CD4-positive, alpha-beta memory T cell (primary cell): ENCODE measurements at regions of chr19 and their contacts with region 1.

Region 1: GRCh38 chr19:42199440-42200115 is 17.9 kb downstream of the DEDD2 start:
- DNase-seq: peak; percentile 53 to 75 (median 65)
- H3K4me3 ChIP-seq: peak overlapping the region; percentile 43 to 49
- H3K4me3 Mint-ChIP-seq: peak overlapping the region; percentile 80 to 93 (median 88)
- H3K27ac ChIP-seq: peak overlapping the region; percentile 86
- H3K27ac Mint-ChIP-seq: peak overlapping the region; percentile 86 to 96 (median 96)
- H3K4me1 ChIP-seq: peaks cover 94% of the 10 kb centered on the region
- H3K4me1 Mint-ChIP-seq: peaks cover 63 to 93% (median 78%) of the 10 kb centered on the region in 4 donors
- H3K27me3 ChIP-seq: no peaks in the 10 kb centered on the region
- H3K27me3 Mint-ChIP-seq: no peaks in the 10 kb centered on the region

Region 2: DNA sequence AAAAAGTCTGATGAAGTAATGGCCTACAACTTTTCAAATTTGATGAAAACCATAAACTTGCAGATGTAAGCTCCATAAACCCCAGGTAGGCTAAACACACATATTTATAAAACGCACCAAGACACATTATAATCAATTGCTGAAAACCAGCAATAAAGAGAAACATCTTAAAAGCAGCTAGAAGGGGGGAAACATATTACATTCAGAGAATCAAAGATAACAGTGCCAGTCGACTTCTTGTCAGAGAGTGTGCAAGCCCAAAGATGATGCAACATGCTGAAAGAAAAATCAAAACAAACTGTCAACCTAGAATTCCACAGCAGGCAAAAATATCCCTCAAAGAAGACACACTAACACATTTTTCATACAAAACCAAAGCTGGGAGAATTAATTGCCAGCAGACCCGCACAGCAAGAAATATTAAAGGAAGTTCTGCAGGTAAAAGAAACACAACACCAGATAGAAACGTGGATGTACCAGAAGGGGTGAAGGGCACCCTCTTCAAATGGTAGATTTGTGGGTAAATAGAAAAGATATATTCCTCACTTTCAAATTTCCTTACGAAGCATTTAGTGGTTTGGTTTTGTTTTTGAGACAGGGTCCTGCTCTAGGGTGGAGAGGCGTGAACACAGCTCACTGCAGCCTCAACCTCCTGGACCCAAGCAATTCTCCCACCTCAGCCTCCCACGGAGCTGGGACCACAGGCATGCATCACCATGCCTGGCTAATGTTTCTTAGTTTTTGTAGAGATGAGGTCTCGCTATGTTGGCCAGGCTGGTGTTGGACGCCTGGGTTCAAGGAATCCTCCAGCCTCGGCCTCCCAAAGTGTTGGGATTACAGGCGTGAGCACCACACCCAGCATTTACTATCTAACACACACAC is 189.1 kb before region 1 on chr19:
- CTCF ChIA-PET with region 1: no interaction called
- POLR2A ChIA-PET with region 1: no interaction called
- intact Hi-C with region 1: no loop called
- DNase-seq: no peak
- H3K4me3 ChIP-seq: no peak overlapping the region
- H3K4me3 Mint-ChIP-seq: no peak overlapping the region
- H3K27ac ChIP-seq: no peak overlapping the region
- H3K27ac Mint-ChIP-seq: no peak overlapping the region
- H3K4me1 ChIP-seq: no peaks in the 10 kb centered on the region
- H3K4me1 Mint-ChIP-seq: no peaks in the 10 kb centered on the region
- H3K27me3 ChIP-seq: no peaks in the 10 kb centered on the region
- H3K27me3 Mint-ChIP-seq: peaks cover 4 to 5% of the 10 kb centered on the region in 2 donors

Region 3: DNA sequence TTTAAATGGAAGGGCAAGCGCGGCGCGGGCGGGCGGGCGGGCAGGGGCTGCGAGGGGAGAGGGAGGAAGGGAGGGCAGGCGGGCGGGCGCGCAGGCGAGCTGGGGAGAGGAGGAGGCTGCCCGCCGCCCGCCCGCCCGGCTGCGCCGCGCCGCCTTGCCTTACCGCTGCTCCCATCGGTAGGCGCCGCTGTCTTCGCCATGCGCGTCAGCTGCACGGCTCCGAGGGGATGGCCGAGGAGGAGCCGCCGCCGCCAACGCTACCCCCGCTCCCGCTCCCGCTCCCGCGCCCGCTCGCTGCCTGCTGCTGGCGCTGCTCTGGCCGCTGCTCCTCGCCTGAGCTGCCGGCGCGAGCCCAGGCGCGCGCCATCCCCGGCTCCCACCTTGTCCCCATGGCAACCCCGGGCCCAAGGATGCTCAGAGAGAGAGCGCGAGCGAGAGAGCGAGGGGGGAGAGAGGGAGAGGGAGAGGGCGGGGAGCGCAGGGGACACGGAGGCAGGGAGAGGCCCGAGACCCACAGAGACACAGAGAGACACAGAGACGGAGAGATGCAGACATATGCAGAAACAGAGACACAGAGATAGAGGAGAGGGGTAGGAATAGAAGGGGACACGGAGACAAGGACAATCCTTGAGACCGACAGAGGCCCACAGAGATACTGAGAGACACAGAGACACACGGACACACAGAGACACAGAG is 22.4 kb before region 1 on chr19:
- CTCF ChIA-PET with region 1: interaction called, 10 read pairs
- POLR2A ChIA-PET with region 1: interaction called, 39 read pairs
- intact Hi-C with region 1: no loop called
- DNase-seq: peak; percentile 75 to 79 (median 78)
- H3K4me3 ChIP-seq: peak overlapping the region in 1 of 2 donors; percentile 59
- H3K4me3 Mint-ChIP-seq: no peak overlapping the region
- H3K27ac ChIP-seq: no peak overlapping the region
- H3K27ac Mint-ChIP-seq: no peak overlapping the region
- H3K4me1 ChIP-seq: peaks cover 29% of the 10 kb centered on the region
- H3K4me1 Mint-ChIP-seq: peaks cover 10 to 29% (median 18%) of the 10 kb centered on the region in 4 donors
- H3K27me3 ChIP-seq: peaks cover 17% of the 10 kb centered on the region
- H3K27me3 Mint-ChIP-seq: peaks cover 4 to 11% of the 10 kb centered on the region in 2 donors

Region 4: DNA sequence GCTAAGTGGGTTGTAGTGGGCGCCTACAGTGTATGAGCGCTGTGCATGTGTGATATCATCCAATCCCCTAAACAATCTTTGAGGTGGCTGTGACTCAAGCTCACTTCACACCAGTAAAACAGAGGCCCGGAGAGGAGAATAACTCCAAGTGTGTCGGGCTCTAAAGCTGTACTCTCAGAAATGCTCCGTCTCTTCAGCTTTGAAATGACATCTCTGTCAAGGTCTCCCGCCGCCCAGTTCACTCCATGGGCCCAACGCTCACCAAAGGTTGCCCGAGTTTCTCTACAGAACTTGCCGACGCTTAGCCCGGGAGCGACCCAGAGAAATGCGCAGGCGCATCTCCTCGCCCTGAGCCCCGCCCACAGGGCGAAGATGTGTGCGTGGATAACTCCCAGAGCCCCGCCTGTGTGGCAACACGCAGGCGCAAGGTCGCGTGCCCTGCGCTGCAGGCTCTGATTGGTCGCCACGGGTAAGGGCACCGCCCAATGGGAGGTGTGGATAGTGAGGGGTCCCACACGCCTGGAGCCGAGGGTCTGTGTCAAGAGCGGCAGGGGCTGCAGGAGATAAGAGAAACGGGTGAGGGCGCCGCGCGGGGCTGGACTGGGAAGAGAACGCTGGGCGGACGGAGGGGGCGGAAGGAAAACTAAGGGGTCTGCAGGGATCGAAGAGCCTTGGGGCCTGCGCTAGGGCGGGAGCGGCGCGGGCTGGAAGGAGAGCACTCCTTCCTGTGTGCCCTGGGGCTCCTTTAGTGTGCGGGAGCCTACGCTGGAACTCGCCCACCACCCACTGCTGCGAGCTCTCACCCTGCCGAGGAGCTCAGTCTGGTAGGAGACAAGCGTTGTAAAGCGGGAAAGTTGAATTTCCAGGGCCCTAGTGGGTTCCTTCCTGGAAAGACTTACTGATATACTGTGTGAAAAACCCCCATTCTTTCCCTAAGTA is 20.5 kb after region 1 on chr19 and contains the start of gene ZNF526:
- CTCF ChIA-PET with region 1: interaction called, 17 read pairs
- POLR2A ChIA-PET with region 1: interaction called, 149 read pairs
- intact Hi-C with region 1: loop called (anchors 1 kb)
- DNase-seq: peak; percentile 95 to 97 (median 97)
- H3K4me3 ChIP-seq: peak within 1 kb of the TSS; percentile 82 to 86
- H3K4me3 Mint-ChIP-seq: peak within 1 kb of the TSS; percentile 96 to 100 (median 98)
- H3K27ac ChIP-seq: peak within 1 kb of the TSS; percentile 77
- H3K27ac Mint-ChIP-seq: peak within 1 kb of the TSS; percentile 94 to 99 (median 98)
- H3K4me1 ChIP-seq: peaks cover 45% of the 10 kb centered on the region
- H3K4me1 Mint-ChIP-seq: peaks cover 39 to 69% (median 53%) of the 10 kb centered on the region in 4 donors
- H3K27me3 ChIP-seq: no peaks in the 10 kb centered on the region
- H3K27me3 Mint-ChIP-seq: no peaks in the 10 kb centered on the region
- total RNA-seq, gene ZNF526: 26.7 to 28.8 TPM

Region 5: DNA sequence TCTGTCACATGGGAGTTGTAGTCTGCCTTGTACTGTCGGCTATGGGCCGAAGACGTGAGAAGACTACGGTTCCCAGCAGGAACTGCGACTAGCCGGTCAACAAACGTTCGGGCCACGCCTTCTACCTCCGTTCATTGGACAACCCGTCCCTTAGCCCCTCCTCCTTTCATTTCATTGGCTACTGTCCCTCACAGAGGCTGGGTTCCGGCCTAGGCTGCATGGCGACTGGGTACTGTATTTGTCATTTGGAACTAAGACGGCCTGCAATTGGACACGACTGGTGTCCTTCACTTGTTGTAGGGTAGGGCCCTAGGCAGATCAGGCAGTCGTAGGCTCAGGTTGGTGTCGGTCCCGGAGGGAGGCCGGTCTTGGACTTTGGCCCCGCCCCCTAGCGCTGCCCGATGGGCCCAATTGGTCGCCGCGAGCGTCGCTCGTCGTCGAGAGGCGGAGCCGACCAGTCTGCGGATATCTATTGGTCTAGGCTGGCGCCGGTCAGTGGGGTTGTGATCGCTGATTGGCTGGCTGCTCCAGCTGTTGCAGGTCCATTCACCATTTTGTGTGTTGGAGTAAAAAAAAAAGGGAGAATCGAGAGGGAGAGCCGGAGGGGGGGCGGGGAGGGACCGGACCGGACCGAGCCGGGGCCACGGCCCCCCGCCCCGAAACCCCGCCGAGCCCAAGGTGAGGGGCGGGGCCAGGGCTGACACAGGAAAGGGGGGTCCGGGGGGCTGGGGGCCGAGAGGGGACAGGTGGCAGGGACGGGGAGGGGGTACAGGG is 69.3 kb after region 1 on chr19 and contains the start of gene CIC:
- CTCF ChIA-PET with region 1: no interaction called
- POLR2A ChIA-PET with region 1: interaction called, 17 read pairs
- intact Hi-C with region 1: no loop called
- DNase-seq: peak; percentile 100
- H3K4me3 ChIP-seq: peak within 1 kb of the TSS; percentile 83 to 96
- H3K4me3 Mint-ChIP-seq: peak within 1 kb of the TSS in 4 of 8 donors; percentile 89 to 94 (median 92)
- H3K27ac ChIP-seq: peak within 1 kb of the TSS; percentile 99
- H3K27ac Mint-ChIP-seq: peak within 1 kb of the TSS in 4 of 7 donors; percentile 96 to 99 (median 98)
- H3K4me1 ChIP-seq: peaks cover 33% of the 10 kb centered on the region
- H3K4me1 Mint-ChIP-seq: peaks cover 0 to 29% (median 26%) of the 10 kb centered on the region in 4 donors
- H3K27me3 ChIP-seq: no peaks in the 10 kb centered on the region
- H3K27me3 Mint-ChIP-seq: no peaks in the 10 kb centered on the region
- total RNA-seq, gene CIC: 81.6 to 82.6 TPM

Region 6: GRCh38 chr19:42301656-42302203 is 102.2 kb after region 1 on chr19 and contains the start of gene PRR19:
- CTCF ChIA-PET with region 1: interaction called, 7 read pairs
- POLR2A ChIA-PET with region 1: interaction called, 5 read pairs
- intact Hi-C with region 1: loop called (anchors 5 kb)
- DNase-seq: no peak
- H3K4me3 ChIP-seq: peak within 1 kb of the TSS; percentile 52 to 66
- H3K4me3 Mint-ChIP-seq: peak within 1 kb of the TSS; percentile 85 to 93 (median 90)
- H3K27ac ChIP-seq: peak within 1 kb of the TSS; percentile 63
- H3K27ac Mint-ChIP-seq: peak within 1 kb of the TSS; percentile 81 to 94 (median 89)
- H3K4me1 ChIP-seq: peaks cover 20% of the 10 kb centered on the region
- H3K4me1 Mint-ChIP-seq: peaks cover 16 to 33% (median 22%) of the 10 kb centered on the region in 4 donors
- H3K27me3 ChIP-seq: no peaks in the 10 kb centered on the region
- H3K27me3 Mint-ChIP-seq: no peaks in the 10 kb centered on the region
- total RNA-seq, gene PRR19: 0.28 to 0.64 TPM